Transverse colon (tissue), 4 donors: ENCODE measurements at regions of chr13 and their contacts with region 1.

Region 1: DNA sequence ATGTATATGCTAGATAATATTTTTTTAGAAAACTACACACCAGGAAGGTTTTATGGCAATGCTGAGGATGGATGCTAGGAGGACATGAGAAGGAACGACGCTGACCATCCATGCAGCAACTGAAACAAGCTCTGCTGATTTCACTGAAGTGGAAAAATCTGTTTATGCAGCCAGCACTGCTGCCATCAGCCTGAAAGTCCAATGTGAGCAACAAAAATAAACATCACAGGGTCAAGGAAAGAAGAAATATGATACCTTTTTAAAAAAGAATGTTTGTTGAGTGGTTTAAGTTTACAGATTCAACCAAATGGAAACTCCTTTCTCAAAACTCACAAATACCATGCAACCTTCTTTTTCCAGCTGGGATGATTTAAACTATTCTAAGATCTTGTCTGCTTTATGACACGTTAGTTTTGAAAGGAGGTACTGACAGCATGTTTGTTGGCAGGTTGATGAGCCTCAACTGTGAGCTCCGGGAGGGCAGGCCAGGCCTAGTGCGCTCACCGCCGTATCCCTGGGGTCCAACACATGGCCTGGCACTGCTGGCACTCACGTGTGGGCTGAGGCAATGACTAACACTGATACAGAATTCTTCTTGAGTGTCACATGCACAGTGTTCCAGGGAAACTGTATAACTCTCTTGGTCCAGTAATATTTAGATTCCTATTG is 46.8 kb downstream of the LATS2 start:
- DNase-seq: no peak
- H3K4me3 ChIP-seq: no peak overlapping the region
- H3K27ac ChIP-seq: peak overlapping the region; percentile 41 to 68 (median 64)
- H3K4me1 ChIP-seq: peaks cover 9 to 47% (median 28%) of the 10 kb centered on the region in 4 donors
- H3K27me3 ChIP-seq: no peaks in the 10 kb centered on the region
- CTCF ChIP-seq: no peak
- EP300 ChIP-seq: no peak
- POLR2A ChIP-seq: no peak

Region 2: GRCh38 chr13:21060987-21061763 is 46.5 kb after region 1 on chr13 and contains the start of gene LATS2:
- in situ Hi-C with region 1: no loop called
- intact Hi-C with region 1: loop called (anchors 5 kb)
- DNase-seq: peak; percentile 96
- H3K4me3 ChIP-seq: peak within 1 kb of the TSS; percentile 73 to 93 (median 86)
- H3K27ac ChIP-seq: peak within 1 kb of the TSS; percentile 97 to 98 (median 98)
- H3K4me1 ChIP-seq: peaks cover 3 to 28% (median 12%) of the 10 kb centered on the region in 4 donors
- H3K27me3 ChIP-seq: peaks cover 11% of the 10 kb centered on the region
- CTCF ChIP-seq: peak in 1 of 5 experiments; percentile 22
- EP300 ChIP-seq: no peak
- POLR2A ChIP-seq: peak; percentile 83
- total RNA-seq, gene LATS2: 8.9 to 15.7 (median 12.5) TPM

Region 3: DNA sequence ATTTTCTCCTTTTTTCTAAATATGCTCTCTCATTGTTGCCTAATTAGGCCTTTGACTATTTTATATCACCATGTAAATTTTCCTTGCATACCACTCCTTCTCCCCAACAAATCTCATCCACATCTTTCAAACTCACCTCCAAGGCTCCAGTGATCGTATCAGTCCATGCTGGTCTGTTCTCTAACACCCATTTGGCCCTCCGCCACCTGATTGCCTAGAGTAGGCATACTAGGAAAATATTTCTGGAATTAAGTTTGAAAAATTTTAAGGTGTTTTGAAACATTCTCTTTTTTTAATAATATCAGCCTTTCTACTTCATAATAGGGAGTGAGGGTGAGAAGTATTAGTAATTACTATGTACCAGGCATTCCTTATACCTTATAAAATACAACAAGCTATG is 1130.2 kb after region 1 on chr13:
- in situ Hi-C with region 1: no loop called
- intact Hi-C with region 1: no loop called
- DNase-seq: no peak
- H3K4me3 ChIP-seq: no peak overlapping the region
- H3K27ac ChIP-seq: no peak overlapping the region
- H3K4me1 ChIP-seq: no peaks in the 10 kb centered on the region
- H3K27me3 ChIP-seq: no peaks in the 10 kb centered on the region
- CTCF ChIP-seq: no peak
- EP300 ChIP-seq: no peak
- POLR2A ChIP-seq: no peak